ENCODE measurements at regions of chr15 and their contacts with region 1.

Region 1: GRCh38 chr15:60507596-60508424 is 28.9 kb upstream of the ICE2 start:
- DNase-seq: peak; percentile 66 to 79 (median 78)
- H3K4me3 ChIP-seq: no peak overlapping the region
- H3K4me3 Mint-ChIP-seq: peak overlapping the region in 6 of 8 donors; percentile 0 to 67 (median 28)
- H3K27ac ChIP-seq: peak overlapping the region; percentile 21
- H3K27ac Mint-ChIP-seq: peak overlapping the region; percentile 83 to 94 (median 91)
- H3K4me1 ChIP-seq: peaks cover 43% of the 10 kb centered on the region
- H3K4me1 Mint-ChIP-seq: peaks cover 29 to 55% (median 41%) of the 10 kb centered on the region in 4 donors
- H3K27me3 ChIP-seq: no peaks in the 10 kb centered on the region
- H3K27me3 Mint-ChIP-seq: no peaks in the 10 kb centered on the region

Region 2: GRCh38 chr15:60228101-60228500 is 279.7 kb before region 1 on chr15:
- CTCF ChIA-PET with region 1: no interaction called
- POLR2A ChIA-PET with region 1: no interaction called
- intact Hi-C with region 1: no loop called
- DNase-seq: no peak
- H3K4me3 ChIP-seq: no peak overlapping the region
- H3K4me3 Mint-ChIP-seq: no peak overlapping the region
- H3K27ac ChIP-seq: no peak overlapping the region
- H3K27ac Mint-ChIP-seq: no peak overlapping the region
- H3K4me1 ChIP-seq: no peaks in the 10 kb centered on the region
- H3K4me1 Mint-ChIP-seq: no peaks in the 10 kb centered on the region
- H3K27me3 ChIP-seq: no peaks in the 10 kb centered on the region
- H3K27me3 Mint-ChIP-seq: peaks cover 5 to 17% of the 10 kb centered on the region in 2 donors

Region 3: GRCh38 chr15:60580650-60581376 is 73.0 kb after region 1 on chr15:
- CTCF ChIA-PET with region 1: interaction called, 7 read pairs
- POLR2A ChIA-PET with region 1: interaction called, 15 read pairs
- intact Hi-C with region 1: loop called (anchors 1 kb)
- DNase-seq: peak; percentile 74 to 88 (median 83)
- H3K4me3 ChIP-seq: peak overlapping the region in 1 of 2 donors; percentile 16
- H3K4me3 Mint-ChIP-seq: peak overlapping the region; percentile 73 to 89 (median 82)
- H3K27ac ChIP-seq: peak overlapping the region; percentile 92
- H3K27ac Mint-ChIP-seq: peak overlapping the region; percentile 92 to 98 (median 97)
- H3K4me1 ChIP-seq: peaks cover 99% of the 10 kb centered on the region
- H3K4me1 Mint-ChIP-seq: peaks cover 73 to 96% (median 85%) of the 10 kb centered on the region in 4 donors
- H3K27me3 ChIP-seq: no peaks in the 10 kb centered on the region
- H3K27me3 Mint-ChIP-seq: no peaks in the 10 kb centered on the region

Region 4: DNA sequence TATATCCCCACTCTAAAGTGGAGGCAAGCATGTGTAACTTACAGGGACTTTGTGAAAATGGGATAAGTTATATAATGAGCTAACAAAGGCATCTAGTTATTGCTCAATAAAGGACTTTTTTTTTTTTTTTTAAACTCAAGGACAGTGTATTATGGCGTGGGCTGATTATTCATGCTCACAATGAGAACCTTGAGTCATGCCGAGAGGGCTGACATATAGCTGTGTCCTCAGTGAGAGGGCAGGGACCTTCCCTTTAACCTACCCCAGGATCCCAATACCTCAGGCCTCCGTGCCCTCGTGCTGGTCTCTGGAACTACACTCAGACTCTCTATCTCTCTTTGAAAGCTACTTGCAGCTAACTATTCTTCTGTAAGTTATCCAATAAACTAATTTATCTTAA is 291.0 kb after region 1 on chr15:
- CTCF ChIA-PET with region 1: no interaction called
- POLR2A ChIA-PET with region 1: no interaction called
- intact Hi-C with region 1: loop called (anchors 5 kb)
- DNase-seq: peak in 1 of 5 donors; percentile 57
- H3K4me3 ChIP-seq: no peak overlapping the region
- H3K4me3 Mint-ChIP-seq: peak overlapping the region in 5 of 8 donors; percentile 25 to 55 (median 48)
- H3K27ac ChIP-seq: peak overlapping the region; percentile 56
- H3K27ac Mint-ChIP-seq: peak overlapping the region; percentile 87 to 98 (median 93)
- H3K4me1 ChIP-seq: peaks cover 95% of the 10 kb centered on the region
- H3K4me1 Mint-ChIP-seq: peaks cover 67 to 97% (median 85%) of the 10 kb centered on the region in 4 donors
- H3K27me3 ChIP-seq: no peaks in the 10 kb centered on the region
- H3K27me3 Mint-ChIP-seq: no peaks in the 10 kb centered on the region

Region 5: DNA sequence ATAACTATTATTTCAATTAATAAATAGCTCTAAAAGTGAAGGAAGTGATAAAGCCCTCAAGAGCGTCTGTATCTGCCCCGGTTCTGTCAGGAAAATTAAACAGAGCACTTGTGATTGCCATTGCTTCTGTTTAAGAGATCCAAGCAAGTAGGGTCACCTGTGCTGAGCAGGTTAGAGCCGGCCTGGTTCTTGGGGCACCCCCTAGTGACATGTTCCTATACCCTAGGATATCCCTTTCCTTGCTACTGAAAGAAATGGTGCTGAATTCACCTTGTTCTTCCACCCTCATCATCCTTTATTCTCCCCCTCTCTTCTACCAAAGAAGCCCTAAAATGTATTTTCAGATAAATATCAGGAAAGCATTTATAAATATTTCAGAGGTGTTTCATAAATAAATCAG is 397.8 kb after region 1 on chr15:
- CTCF ChIA-PET with region 1: interaction called, 4 read pairs
- POLR2A ChIA-PET with region 1: no interaction called
- intact Hi-C with region 1: loop called (anchors 1 kb)
- DNase-seq: peak; percentile 36 to 50 (median 43)
- H3K4me3 ChIP-seq: no peak overlapping the region
- H3K4me3 Mint-ChIP-seq: no peak overlapping the region
- H3K27ac ChIP-seq: no peak overlapping the region
- H3K27ac Mint-ChIP-seq: peak overlapping the region in 1 of 7 donors; percentile 32
- H3K4me1 ChIP-seq: no peaks in the 10 kb centered on the region
- H3K4me1 Mint-ChIP-seq: peaks cover 3 to 20% (median 5%) of the 10 kb centered on the region in 4 donors
- H3K27me3 ChIP-seq: no peaks in the 10 kb centered on the region
- H3K27me3 Mint-ChIP-seq: no peaks in the 10 kb centered on the region

Region 6: DNA sequence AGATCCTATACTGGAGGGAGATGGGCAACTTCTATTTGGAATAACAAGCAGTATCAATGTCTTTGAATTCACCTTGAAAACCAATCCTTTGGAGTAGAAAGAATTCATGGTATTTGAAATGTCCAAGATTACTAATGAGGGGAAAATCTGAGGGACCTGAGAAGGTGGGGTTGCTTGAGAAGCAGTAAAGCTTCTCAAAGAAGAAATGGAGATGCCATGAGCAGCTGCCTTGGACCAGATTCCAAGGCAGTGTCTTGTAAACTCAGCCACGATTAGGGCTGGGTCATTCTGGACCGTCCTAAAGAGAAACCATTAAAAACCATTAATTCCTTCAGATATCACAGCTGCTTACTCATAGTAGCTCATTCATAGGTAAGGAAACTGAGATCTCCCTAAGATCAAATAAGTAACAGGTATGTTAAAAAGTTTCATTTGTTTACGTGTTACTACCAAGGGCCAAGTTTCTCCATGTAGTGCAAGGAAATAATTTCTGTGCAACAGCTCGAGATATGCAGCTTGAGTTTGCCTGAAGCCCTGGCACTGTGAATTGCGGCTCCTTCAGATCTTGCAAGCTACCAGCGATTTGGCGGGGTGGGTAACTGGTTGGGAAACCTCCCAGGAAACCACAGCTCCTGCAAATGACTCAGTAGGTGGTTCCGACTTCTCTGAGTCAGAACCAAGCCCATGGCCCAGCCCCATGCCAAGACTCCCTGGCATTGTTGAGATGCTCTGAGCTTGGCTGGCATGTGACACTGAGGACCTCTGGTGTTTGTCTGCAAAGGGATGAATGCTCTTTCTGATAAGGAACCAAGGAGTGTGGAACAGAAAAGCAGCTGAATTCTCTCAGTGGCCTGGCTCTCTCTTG is 424.5 kb after region 1 on chr15:
- CTCF ChIA-PET with region 1: interaction called, 16 read pairs
- POLR2A ChIA-PET with region 1: no interaction called
- intact Hi-C with region 1: loop called (anchors 1 kb)
- DNase-seq: peak; percentile 52 to 86 (median 61)
- H3K4me3 ChIP-seq: no peak overlapping the region
- H3K4me3 Mint-ChIP-seq: peak overlapping the region in 6 of 8 donors; percentile 5 to 65 (median 31)
- H3K27ac ChIP-seq: no peak overlapping the region
- H3K27ac Mint-ChIP-seq: peak overlapping the region in 4 of 7 donors; percentile 8 to 57 (median 55)
- H3K4me1 ChIP-seq: peaks cover 14% of the 10 kb centered on the region
- H3K4me1 Mint-ChIP-seq: peaks cover 9 to 25% (median 14%) of the 10 kb centered on the region in 4 donors
- H3K27me3 ChIP-seq: no peaks in the 10 kb centered on the region
- H3K27me3 Mint-ChIP-seq: no peaks in the 10 kb centered on the region

Region 7: GRCh38 chr15:62362608-62363007 is 1854.8 kb after region 1 on chr15:
- CTCF ChIA-PET with region 1: no interaction called
- POLR2A ChIA-PET with region 1: no interaction called
- intact Hi-C with region 1: no loop called
- DNase-seq: no peak
- H3K4me3 ChIP-seq: no peak overlapping the region
- H3K4me3 Mint-ChIP-seq: no peak overlapping the region
- H3K27ac ChIP-seq: no peak overlapping the region
- H3K27ac Mint-ChIP-seq: no peak overlapping the region
- H3K4me1 ChIP-seq: no peaks in the 10 kb centered on the region
- H3K4me1 Mint-ChIP-seq: no peaks in the 10 kb centered on the region
- H3K27me3 ChIP-seq: peaks cover 5% of the 10 kb centered on the region
- H3K27me3 Mint-ChIP-seq: peaks cover 17 to 37% of the 10 kb centered on the region in 2 donors

Region 8: DNA sequence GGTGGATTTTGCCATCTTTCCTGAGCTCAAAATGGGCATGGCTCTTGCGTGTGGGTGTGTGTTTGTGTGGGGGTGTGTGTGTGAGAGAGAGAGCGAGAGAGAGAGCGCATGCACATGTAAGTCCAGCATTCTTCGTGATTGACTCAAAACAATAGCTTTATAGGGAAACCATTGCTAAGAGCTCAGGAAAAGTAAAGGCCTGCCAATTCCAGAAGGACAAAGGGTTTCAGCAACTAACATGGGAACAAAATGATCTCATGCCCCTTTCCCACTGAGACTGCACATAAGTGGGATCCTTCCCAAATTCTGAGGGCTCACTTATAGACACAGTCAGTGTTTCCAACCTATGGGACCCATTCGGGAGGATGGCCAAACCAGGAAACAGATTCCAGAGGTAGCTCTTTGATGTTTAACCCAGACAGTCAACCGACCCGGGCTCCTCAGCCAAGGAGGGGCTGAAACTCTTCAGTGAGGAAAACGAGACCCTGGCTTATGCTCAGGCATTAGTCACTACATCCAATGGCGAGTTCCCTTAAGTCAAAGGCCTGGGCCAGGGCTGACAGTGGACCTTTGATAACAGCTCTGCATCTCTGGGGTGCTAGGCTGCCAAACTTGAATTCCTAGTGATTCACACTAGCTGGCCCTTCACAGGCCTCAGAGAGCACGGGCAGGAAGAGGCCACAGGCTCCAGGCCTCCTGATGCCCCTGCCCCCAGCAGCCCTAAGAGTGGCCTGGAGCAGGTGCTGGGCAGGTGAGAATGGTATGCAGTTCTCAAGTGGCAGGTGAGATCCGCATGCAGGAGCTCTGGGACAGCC is 1962.3 kb after region 1 on chr15:
- CTCF ChIA-PET with region 1: no interaction called
- POLR2A ChIA-PET with region 1: no interaction called
- intact Hi-C with region 1: no loop called
- DNase-seq: no peak
- H3K4me3 ChIP-seq: no peak overlapping the region
- H3K4me3 Mint-ChIP-seq: no peak overlapping the region
- H3K27ac ChIP-seq: no peak overlapping the region
- H3K27ac Mint-ChIP-seq: no peak overlapping the region
- H3K4me1 ChIP-seq: no peaks in the 10 kb centered on the region
- H3K4me1 Mint-ChIP-seq: no peaks in the 10 kb centered on the region
- H3K27me3 ChIP-seq: no peaks in the 10 kb centered on the region
- H3K27me3 Mint-ChIP-seq: peaks cover 6 to 12% of the 10 kb centered on the region in 2 donors

Measured in CD4-positive, alpha-beta memory T cell (primary cell).